ENCODE measurements at regions of chr2 and their contacts with region 1.

Region 1: DNA sequence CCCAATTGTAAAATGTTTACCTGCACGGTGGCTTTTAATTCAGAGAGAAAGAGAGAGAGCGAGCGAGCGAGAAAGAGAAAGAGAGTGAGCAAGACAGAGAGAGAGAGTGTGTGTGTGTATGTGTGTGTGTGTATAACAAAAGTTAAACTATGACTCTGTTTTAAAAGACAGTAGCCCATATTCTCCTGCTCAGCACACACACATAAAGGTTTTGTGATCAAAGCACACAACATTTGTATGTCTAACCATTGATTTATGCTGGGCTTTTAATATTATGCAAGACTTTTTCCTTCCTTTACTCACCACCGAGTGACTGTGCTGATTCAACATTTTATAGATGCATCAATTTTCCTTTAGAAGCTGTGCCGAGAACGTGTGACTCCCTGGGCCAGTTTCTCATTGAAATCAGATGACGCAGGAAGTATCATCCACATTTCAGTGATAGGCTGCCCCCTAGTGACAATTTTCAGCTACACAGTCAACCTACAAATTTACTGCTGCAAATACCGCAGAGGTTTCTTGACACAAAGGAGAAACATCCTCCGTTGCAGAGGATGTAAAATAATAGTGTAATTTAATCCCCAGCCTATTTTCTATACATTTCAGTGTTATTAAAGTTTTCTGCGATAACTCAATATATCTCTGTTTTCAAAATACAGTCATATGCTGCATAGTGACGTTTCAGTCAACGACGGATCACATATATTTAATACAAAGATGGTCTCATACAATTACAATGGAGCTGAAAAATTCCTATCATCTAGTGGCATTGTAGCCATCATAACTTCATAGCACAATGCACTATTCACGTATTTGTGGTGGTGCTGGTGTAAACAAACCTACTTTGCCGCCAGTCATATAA is 165.9 kb upstream of the TANK start:
- DNase-seq: peak; percentile 86
- H3K4me3 ChIP-seq: no peak overlapping the region
- H3K27ac ChIP-seq: no peak overlapping the region
- H3K4me1 ChIP-seq: peaks cover 2% of the 10 kb centered on the region
- H3K27me3 ChIP-seq: no peaks in the 10 kb centered on the region
- CTCF ChIP-seq: peak; percentile 58 to 70
- POLR2A ChIP-seq: no peak

Region 2: GRCh38 chr2:160252278-160252887 is 742.0 kb before region 1 on chr2:
- CTCF ChIA-PET with region 1: interaction called, 21 read pairs
- POLR2A ChIA-PET with region 1: no interaction called
- dilution Hi-C with region 1: no loop called
- intact Hi-C with region 1: loop called (anchors 1 kb)
- DNase-seq: peak; percentile 58
- H3K4me3 ChIP-seq: no peak overlapping the region
- H3K27ac ChIP-seq: no peak overlapping the region
- H3K4me1 ChIP-seq: no peaks in the 10 kb centered on the region
- H3K27me3 ChIP-seq: no peaks in the 10 kb centered on the region
- CTCF ChIP-seq: peak; percentile 52 to 57
- POLR2A ChIP-seq: no peak

Region 3: GRCh38 chr2:160353166-160353565 is 641.2 kb before region 1 on chr2:
- CTCF ChIA-PET with region 1: interaction called, 16 read pairs
- POLR2A ChIA-PET with region 1: no interaction called
- dilution Hi-C with region 1: no loop called
- intact Hi-C with region 1: no loop called
- DNase-seq: peak; percentile 38
- H3K4me3 ChIP-seq: no peak overlapping the region
- H3K27ac ChIP-seq: no peak overlapping the region
- H3K4me1 ChIP-seq: peaks cover 3% of the 10 kb centered on the region
- H3K27me3 ChIP-seq: no peaks in the 10 kb centered on the region
- CTCF ChIP-seq: peak; percentile 28 to 31
- POLR2A ChIP-seq: no peak

Region 4: DNA sequence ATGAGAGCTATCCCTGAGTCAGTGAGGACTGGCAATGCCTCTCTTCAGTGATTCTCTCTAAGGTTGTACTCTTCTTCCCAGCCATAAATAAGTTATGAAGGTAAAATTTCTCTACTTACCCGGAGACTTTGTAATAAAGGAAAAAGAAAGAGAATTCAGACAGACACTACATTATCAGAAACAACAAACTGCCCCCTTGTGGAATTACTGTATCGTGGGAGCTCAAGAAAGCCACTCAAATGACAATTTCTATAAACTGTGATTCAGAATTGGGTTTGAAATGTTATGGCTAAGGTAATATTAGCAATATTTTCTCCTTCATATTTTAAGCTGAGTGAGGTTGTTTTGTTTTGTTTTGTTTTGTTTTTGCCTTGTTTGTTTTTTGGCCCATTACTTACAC is 10.0 kb after region 1 on chr2:
- CTCF ChIA-PET with region 1: interaction called, 47 read pairs
- POLR2A ChIA-PET with region 1: no interaction called
- dilution Hi-C with region 1: no loop called
- intact Hi-C with region 1: no loop called
- DNase-seq: peak; percentile 22
- H3K4me3 ChIP-seq: no peak overlapping the region
- H3K27ac ChIP-seq: no peak overlapping the region
- H3K4me1 ChIP-seq: no peaks in the 10 kb centered on the region
- H3K27me3 ChIP-seq: no peaks in the 10 kb centered on the region
- CTCF ChIP-seq: peak; percentile 21 to 31
- POLR2A ChIP-seq: no peak

Region 5: DNA sequence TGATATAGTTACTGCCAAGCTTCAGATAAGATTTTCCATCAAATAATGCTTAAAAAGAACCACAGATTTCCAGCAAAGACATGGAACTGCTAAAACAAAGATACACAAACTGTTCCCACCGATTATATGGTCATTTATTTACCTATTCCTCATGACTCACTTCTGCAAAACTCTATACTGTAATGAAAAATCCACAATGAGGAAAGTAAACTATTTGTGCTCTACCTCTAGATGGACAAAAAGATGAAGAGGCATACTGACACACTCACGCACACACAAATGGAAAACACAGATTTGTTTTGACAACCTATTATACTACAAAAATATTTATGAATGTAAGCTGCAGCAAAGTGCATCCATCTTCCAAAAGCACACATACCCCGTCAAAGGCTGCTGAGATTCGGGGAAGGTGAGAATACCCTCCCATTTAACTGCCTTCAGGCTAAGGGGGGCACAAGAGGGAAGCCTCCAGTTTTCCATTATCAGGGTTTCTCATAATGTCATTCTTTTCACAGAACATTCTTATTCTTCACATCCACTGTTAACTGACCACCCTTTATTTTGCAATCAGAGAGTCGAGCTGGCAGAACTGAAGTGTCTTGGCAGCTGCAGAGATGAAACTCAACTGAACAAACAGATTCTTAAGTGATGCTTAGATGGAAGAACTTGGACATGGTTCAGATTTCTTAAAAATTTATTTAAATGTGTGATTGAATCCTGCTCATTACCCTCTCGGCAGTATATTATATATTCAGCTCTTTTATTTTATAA is 49.9 kb after region 1 on chr2:
- CTCF ChIA-PET with region 1: no interaction called
- POLR2A ChIA-PET with region 1: no interaction called
- dilution Hi-C with region 1: no loop called
- intact Hi-C with region 1: no loop called
- DNase-seq: no peak
- H3K4me3 ChIP-seq: no peak overlapping the region
- H3K27ac ChIP-seq: no peak overlapping the region
- H3K4me1 ChIP-seq: no peaks in the 10 kb centered on the region
- H3K27me3 ChIP-seq: peaks cover 28 to 38% of the 10 kb centered on the region in 2 experiments
- CTCF ChIP-seq: no peak
- POLR2A ChIP-seq: no peak

Region 6: DNA sequence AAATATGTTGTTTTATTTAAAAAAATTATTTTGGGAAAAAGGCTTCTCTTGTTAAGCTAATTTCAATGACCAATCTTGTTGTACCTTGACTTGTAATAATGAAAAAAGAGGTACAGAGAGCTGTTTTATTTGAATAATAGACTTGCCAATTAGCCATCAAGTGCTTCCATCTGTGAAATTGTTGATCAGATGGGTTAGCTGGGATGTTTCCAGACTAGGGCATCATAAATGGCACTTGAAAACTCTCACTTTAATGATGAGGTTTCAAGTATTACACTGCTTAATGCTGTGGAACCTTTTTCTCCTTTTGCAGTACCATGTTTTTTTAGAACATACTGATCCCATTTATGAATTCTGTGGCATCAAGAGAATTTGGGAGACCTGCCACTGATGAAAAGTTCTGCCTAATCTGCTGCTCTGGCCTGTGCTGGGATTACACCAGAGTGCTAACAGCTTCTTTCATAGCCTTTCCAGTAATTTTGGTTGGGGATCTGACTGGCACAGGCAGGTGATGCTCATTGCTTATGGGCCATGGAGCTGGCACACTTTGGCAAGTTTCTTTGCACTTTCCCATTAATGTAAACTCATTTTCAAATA is 338.1 kb after region 1 on chr2:
- CTCF ChIA-PET with region 1: no interaction called
- POLR2A ChIA-PET with region 1: no interaction called
- dilution Hi-C with region 1: no loop called
- intact Hi-C with region 1: no loop called
- DNase-seq: no peak
- H3K4me3 ChIP-seq: no peak overlapping the region
- H3K27ac ChIP-seq: no peak overlapping the region
- H3K4me1 ChIP-seq: no peaks in the 10 kb centered on the region
- H3K27me3 ChIP-seq: no peaks in the 10 kb centered on the region
- CTCF ChIP-seq: no peak
- POLR2A ChIP-seq: no peak